Lower leg skin (tissue), 4 donors: ENCODE measurements at regions of chr5 and their contacts with region 1.

Region 1: DNA sequence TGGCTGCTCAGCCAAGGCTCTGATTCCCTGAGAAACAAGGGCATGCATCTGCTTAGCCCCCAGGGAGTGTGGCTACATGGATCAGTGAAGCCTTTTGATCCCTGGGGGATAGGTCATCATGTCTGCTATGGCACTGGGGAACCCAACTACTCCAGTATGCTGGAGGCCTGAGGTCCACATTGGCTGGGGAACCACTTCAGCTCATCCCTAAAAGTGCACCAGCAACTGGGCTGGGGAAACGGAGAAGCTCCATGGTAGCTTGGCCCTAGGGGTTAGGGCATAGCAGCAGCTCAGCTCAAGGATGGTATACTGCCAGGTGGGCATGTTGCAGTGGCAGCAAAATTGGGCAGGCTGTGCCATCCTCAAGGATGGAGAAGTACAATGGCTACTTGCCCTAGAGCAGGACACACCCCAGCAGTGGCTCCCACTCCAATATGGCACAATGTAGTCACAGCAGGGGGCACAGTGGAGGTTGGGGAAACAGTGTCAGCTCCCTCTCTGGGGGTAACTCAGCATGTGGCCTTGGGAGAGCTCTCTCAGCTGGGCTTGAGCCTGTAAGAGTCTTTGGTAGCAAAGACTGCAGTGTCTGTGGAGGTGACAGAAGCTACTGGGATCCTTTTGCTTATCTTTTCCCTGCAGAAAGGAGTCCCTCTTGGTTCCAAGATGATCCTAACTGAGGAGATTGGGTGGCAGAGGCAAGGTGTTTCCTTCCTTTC is 111.5 kb upstream of the FSTL4 start:
- DNase-seq: peak in 1 of 2 donors; percentile 45
- H3K4me3 ChIP-seq: no peak overlapping the region
- CTCF ChIP-seq: no peak
- POLR2A ChIP-seq: no peak

Region 2: GRCh38 chr5:132094393-132095076 is 1629.3 kb before region 1 on chr5:
- intact Hi-C with region 1: loop called (anchors 5 kb)
- DNase-seq: peak in 1 of 2 donors; percentile 68
- H3K4me3 ChIP-seq: no peak overlapping the region
- CTCF ChIP-seq: no peak
- POLR2A ChIP-seq: no peak